ENCODE measurements at regions of chr12 and their contacts with region 1.

Region 1: DNA sequence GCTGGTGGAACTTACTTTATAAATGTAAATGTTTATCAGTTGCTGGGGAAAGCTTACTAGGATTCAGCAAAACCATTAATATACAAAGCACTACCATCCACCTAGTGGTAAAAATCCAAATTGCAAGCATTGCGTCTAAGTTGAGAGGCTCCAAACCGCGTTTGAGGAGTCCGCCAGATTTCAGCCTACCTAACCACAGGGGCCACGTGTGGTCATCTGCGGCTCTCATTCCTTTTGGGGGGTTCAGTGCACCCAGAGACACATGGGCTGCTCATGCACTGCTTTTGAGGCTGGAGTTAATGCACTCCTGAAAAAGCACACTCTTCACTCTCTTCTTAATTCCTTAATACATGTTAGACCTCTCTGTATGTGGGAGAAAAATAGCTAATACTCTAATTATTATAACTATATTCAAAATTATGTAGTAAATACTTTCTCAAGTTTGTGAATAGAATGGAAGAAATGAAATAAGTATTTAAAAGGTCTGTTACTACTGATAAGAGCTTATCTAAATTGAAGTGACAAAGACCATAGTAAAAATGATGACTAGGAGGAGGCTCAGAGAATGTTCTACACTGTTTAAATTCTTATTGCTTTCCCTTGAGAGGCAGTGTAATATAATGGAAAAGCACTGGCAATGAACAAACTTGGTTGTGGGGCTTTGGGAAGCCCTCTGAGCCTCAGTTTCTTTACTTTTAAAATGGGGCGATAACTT is 41.4 kb upstream of the MANSC4 start:
- DNase-seq: peak; percentile 49
- H3K4me3 Mint-ChIP-seq: no peak overlapping the region
- H3K27ac Mint-ChIP-seq: peak overlapping the region; percentile 88
- H3K4me1 Mint-ChIP-seq: peaks cover 43% of the 10 kb centered on the region
- H3K27me3 Mint-ChIP-seq: peaks cover 30% of the 10 kb centered on the region

Region 2: GRCh38 chr12:26937875-26938700 is 883.3 kb before region 1 on chr12 and contains the starts of genes FGFR1OP2 and INTS13:
- CTCF ChIA-PET with region 1: no interaction called
- intact Hi-C with region 1: loop called (anchors 1 kb)
- DNase-seq: peak; percentile 99
- H3K4me3 Mint-ChIP-seq: peak within 1 kb of the TSS; percentile 93
- H3K27ac Mint-ChIP-seq: peak within 1 kb of the TSS; percentile 98
- H3K4me1 Mint-ChIP-seq: peaks cover 52% of the 10 kb centered on the region
- H3K27me3 Mint-ChIP-seq: no peaks in the 10 kb centered on the region
- total RNA-seq, gene FGFR1OP2: 37.0 to 38.4 TPM
- total RNA-seq, gene INTS13: 39.6 to 42.0 TPM

Region 3: GRCh38 chr12:27462151-27462694 is 359.2 kb before region 1 on chr12:
- CTCF ChIA-PET with region 1: no interaction called
- intact Hi-C with region 1: loop called (anchors 1 kb)
- DNase-seq: peak; percentile 59
- H3K4me3 Mint-ChIP-seq: no peak overlapping the region
- H3K27ac Mint-ChIP-seq: peak overlapping the region; percentile 72
- H3K4me1 Mint-ChIP-seq: peaks cover 58% of the 10 kb centered on the region
- H3K27me3 Mint-ChIP-seq: no peaks in the 10 kb centered on the region

Region 4: GRCh38 chr12:27785882-27786570 is 35.4 kb before region 1 on chr12:
- CTCF ChIA-PET with region 1: interaction called, 13 read pairs
- intact Hi-C with region 1: loop called (anchors 1 kb)
- DNase-seq: no peak
- H3K4me3 Mint-ChIP-seq: no peak overlapping the region
- H3K27ac Mint-ChIP-seq: peak overlapping the region; percentile 69
- H3K4me1 Mint-ChIP-seq: peaks cover 47% of the 10 kb centered on the region
- H3K27me3 Mint-ChIP-seq: no peaks in the 10 kb centered on the region

Region 5: DNA sequence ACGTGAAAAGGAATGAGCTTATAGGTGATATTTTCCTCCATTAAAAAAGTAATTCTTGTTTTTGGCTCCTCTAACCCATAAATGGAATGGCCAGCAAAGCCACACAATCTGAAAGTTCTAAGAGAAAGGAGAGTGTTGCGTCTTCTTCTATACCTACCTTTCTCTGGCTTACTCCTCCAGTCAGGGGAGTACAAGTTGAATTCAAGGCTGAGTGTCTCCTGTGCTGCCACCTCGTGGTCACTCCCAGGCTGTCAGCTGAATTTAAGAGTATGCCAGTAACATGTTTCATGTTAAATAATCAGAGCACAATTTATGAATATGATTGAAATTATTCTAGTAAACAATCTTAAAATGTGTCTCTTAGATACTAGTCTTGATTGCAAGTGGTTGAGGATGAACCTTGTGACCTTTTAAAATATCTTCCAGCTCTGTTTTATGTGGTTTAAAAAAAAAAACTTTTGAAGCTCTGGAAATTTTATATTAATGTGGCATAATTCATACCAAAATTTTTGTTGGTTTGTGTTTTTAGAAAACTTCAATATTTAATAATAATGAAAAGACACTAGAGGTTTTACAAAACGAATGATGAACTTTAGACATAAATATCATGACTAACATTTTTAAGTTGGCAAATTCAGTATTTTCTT is 119.5 kb after region 1 on chr12:
- CTCF ChIA-PET with region 1: interaction called, 8 read pairs
- intact Hi-C with region 1: loop called (anchors 1 kb)
- DNase-seq: peak; percentile 91
- H3K4me3 Mint-ChIP-seq: no peak overlapping the region
- H3K27ac Mint-ChIP-seq: no peak overlapping the region
- H3K4me1 Mint-ChIP-seq: no peaks in the 10 kb centered on the region
- H3K27me3 Mint-ChIP-seq: peaks cover 3% of the 10 kb centered on the region

Region 6: GRCh38 chr12:28190321-28191050 is 369.1 kb after region 1 on chr12 and contains the start of gene CCDC91:
- CTCF ChIA-PET with region 1: no interaction called
- intact Hi-C with region 1: loop called (anchors 1 kb)
- DNase-seq: peak; percentile 91
- H3K4me3 Mint-ChIP-seq: peak within 1 kb of the TSS; percentile 96
- H3K27ac Mint-ChIP-seq: peak within 1 kb of the TSS; percentile 97
- H3K4me1 Mint-ChIP-seq: peaks cover 57% of the 10 kb centered on the region
- H3K27me3 Mint-ChIP-seq: no peaks in the 10 kb centered on the region
- total RNA-seq, gene CCDC91: 15.3 to 16.1 TPM

Region 7: GRCh38 chr12:28360253-28360652 is 538.8 kb after region 1 on chr12:
- CTCF ChIA-PET with region 1: no interaction called
- intact Hi-C with region 1: no loop called
- DNase-seq: no peak
- H3K4me3 Mint-ChIP-seq: no peak overlapping the region
- H3K27ac Mint-ChIP-seq: no peak overlapping the region
- H3K4me1 Mint-ChIP-seq: no peaks in the 10 kb centered on the region
- H3K27me3 Mint-ChIP-seq: no peaks in the 10 kb centered on the region

Region 8: GRCh38 chr12:29103539-29103974 is 1282.1 kb after region 1 on chr12:
- CTCF ChIA-PET with region 1: no interaction called
- intact Hi-C with region 1: loop called (anchors 1 kb)
- DNase-seq: peak; percentile 64
- H3K4me3 Mint-ChIP-seq: no peak overlapping the region
- H3K27ac Mint-ChIP-seq: no peak overlapping the region
- H3K4me1 Mint-ChIP-seq: peaks cover 31% of the 10 kb centered on the region
- H3K27me3 Mint-ChIP-seq: no peaks in the 10 kb centered on the region